Naive thymus-derived CD4-positive, alpha-beta T cell (primary cell): ENCODE measurements at regions of chr11 and their contacts with region 1.

Region 1: DNA sequence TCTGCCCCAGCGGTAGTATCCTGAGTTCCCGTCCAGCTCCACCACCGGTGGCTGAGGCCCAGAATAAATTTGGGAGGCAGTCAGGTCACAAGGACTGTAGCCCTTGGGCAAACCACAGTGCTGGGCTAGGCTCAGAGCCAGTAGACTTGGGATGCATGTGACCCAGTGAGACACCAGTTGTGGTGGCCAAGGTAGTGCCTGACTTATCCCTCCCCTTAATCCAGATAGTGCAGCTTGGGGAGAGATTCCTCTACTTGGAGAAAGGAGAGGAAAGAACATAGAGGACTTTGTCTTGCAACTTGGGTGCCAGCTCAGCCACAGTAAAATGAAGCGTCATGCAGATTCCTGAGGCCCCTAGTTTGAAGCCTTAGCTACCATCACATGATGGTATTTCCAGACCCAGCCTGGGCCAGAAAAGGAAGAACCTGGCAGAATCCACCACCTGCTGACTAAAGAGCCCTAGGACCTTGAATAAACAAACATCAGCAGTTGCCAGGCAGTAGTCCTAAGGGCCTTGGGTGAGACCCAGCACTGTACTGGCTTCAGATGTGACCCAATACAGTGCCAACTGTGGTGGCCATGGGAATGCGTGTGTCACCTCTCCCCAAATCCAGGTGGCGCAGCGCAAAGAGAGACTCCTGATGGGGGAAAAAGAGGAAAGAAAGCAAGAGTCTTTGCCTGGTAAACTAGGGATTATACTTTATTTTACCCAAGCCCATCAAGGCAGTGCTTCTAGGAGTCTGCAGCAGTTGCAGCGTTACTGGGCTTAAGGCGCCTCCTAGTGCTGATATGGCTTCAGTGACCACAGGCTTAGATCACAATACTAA is 17.0 kb upstream of the DDX10 start:
- DNase-seq: peak; percentile 17 to 70 (median 62)
- ATAC-seq: peak; percentile 91
- H3K4me3 ChIP-seq: no peak overlapping the region
- H3K4me3 Mint-ChIP-seq: no peak overlapping the region
- H3K27ac ChIP-seq: no peak overlapping the region
- H3K27ac Mint-ChIP-seq: no peak overlapping the region
- H3K4me1 ChIP-seq: no peaks in the 10 kb centered on the region
- H3K4me1 Mint-ChIP-seq: no peaks in the 10 kb centered on the region
- H3K27me3 ChIP-seq: no peaks in the 10 kb centered on the region
- H3K27me3 Mint-ChIP-seq: peaks cover 0 to 9% (median 0%) of the 10 kb centered on the region in 5 donors

Region 2: DNA sequence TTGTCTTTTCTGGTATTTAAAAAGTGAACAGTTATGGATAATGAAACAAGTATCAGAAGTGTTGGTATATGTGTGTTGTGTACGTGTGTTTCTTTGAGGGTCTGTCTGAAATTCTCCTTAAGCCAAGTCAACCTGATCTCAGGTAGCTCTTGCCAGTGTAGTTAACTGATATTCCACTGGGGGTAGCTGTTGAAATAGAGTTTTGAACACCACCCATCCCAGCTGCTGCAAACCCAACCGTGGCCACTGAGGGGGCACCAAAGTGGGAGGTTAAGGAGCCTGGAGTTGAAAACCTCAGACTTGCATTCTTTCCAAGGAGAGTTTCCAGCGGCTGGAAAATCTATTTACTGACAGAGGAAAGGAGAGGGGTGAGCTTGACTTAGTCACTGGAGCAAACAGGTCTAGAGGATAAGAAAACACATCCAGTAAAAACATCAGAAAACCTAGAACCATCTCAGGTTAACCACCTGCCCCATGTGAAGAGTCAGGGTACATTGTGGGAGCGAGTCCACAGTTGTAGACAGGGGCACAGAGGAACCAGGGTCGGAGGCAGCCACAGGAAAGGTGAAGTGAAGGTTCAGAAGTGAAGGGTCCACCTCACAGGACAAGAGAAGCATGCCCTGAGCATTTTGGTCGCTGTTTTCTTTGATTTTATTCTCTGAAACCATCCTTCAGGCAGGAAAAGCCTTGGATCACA is 648.0 kb before region 1 on chr11:
- CTCF ChIA-PET with region 1: interaction called, 3 read pairs
- POLR2A ChIA-PET with region 1: no interaction called
- intact Hi-C with region 1: loop called in 1 of 2 experiments (anchors 1 kb)
- DNase-seq: peak in 7 of 9 donors; percentile 11 to 38 (median 24)
- ATAC-seq: peak; percentile 78
- H3K4me3 ChIP-seq: no peak overlapping the region
- H3K4me3 Mint-ChIP-seq: no peak overlapping the region
- H3K27ac ChIP-seq: no peak overlapping the region
- H3K27ac Mint-ChIP-seq: no peak overlapping the region
- H3K4me1 ChIP-seq: no peaks in the 10 kb centered on the region
- H3K4me1 Mint-ChIP-seq: no peaks in the 10 kb centered on the region
- H3K27me3 ChIP-seq: no peaks in the 10 kb centered on the region
- H3K27me3 Mint-ChIP-seq: peaks cover 4 to 17% (median 12%) of the 10 kb centered on the region in 5 donors

Region 3: DNA sequence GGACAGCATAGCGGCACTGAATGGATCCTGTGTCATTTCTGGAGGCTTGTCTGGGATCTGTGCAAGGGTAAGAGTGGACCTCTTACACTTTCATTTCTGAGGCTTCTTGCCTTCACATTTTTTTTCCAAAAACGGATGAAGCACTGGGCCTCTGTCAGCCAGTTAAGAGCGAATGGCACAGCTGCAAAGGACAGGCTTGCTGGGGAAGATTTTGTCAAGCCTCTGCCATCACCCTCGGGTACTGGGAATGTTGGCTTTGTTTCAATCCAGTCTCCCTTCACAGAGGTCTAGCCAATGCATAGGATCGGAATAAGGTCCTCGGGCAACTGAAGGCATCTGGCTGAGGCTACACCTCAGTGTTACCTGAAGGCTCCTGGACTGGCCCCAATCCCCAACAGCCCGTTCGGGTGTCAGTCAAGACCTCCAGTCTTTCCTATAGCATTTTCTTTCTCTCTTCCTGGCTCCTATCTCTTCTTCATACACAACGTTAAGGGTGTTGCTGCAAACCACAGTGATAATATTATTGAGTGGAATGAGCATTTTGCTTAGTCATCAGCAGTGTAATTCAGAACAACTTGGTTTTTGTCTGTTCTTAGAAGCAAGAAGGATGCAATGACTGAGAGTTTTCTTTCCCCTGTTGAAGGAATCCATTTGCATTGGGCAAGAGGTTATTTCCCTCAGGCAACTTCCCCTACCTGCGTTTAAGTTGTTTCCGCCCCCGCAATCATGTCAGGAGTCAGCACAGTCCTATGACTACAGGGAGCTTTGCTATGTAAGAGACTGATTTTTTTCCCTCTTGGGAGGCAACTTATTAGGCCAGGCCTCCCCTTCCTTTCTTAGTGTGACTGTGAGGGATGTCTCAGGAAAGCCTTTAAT is 448.2 kb before region 1 on chr11:
- CTCF ChIA-PET with region 1: no interaction called
- POLR2A ChIA-PET with region 1: no interaction called
- intact Hi-C with region 1: loop called in 1 of 2 experiments (anchors 5 kb)
- DNase-seq: peak in 3 of 9 donors; percentile 8 to 59 (median 46)
- ATAC-seq: peak; percentile 85
- H3K4me3 ChIP-seq: no peak overlapping the region
- H3K4me3 Mint-ChIP-seq: peak overlapping the region in 6 of 10 donors; percentile 10 to 55 (median 42)
- H3K27ac ChIP-seq: peak overlapping the region; percentile 31
- H3K27ac Mint-ChIP-seq: peak overlapping the region in 8 of 9 donors; percentile 7 to 86 (median 69)
- H3K4me1 ChIP-seq: peaks cover 0 to 40% of the 10 kb centered on the region in 2 donors
- H3K4me1 Mint-ChIP-seq: peaks cover 31 to 89% (median 81%) of the 10 kb centered on the region in 7 donors
- H3K27me3 ChIP-seq: no peaks in the 10 kb centered on the region
- H3K27me3 Mint-ChIP-seq: no peaks in the 10 kb centered on the region

Region 4: GRCh38 chr11:108414958-108415357 is 233.0 kb before region 1 on chr11:
- CTCF ChIA-PET with region 1: interaction called, 4 read pairs
- POLR2A ChIA-PET with region 1: no interaction called
- intact Hi-C with region 1: loop called (anchors 1 kb)
- DNase-seq: no peak
- ATAC-seq: no peak
- H3K4me3 ChIP-seq: no peak overlapping the region
- H3K4me3 Mint-ChIP-seq: no peak overlapping the region
- H3K27ac ChIP-seq: no peak overlapping the region
- H3K27ac Mint-ChIP-seq: no peak overlapping the region
- H3K4me1 ChIP-seq: no peaks in the 10 kb centered on the region
- H3K4me1 Mint-ChIP-seq: no peaks in the 10 kb centered on the region
- H3K27me3 ChIP-seq: no peaks in the 10 kb centered on the region
- H3K27me3 Mint-ChIP-seq: peaks cover 0 to 5% (median 0%) of the 10 kb centered on the region in 5 donors